ENCODE measurements at regions of chr2 and their contacts with region 1.

Region 1: DNA sequence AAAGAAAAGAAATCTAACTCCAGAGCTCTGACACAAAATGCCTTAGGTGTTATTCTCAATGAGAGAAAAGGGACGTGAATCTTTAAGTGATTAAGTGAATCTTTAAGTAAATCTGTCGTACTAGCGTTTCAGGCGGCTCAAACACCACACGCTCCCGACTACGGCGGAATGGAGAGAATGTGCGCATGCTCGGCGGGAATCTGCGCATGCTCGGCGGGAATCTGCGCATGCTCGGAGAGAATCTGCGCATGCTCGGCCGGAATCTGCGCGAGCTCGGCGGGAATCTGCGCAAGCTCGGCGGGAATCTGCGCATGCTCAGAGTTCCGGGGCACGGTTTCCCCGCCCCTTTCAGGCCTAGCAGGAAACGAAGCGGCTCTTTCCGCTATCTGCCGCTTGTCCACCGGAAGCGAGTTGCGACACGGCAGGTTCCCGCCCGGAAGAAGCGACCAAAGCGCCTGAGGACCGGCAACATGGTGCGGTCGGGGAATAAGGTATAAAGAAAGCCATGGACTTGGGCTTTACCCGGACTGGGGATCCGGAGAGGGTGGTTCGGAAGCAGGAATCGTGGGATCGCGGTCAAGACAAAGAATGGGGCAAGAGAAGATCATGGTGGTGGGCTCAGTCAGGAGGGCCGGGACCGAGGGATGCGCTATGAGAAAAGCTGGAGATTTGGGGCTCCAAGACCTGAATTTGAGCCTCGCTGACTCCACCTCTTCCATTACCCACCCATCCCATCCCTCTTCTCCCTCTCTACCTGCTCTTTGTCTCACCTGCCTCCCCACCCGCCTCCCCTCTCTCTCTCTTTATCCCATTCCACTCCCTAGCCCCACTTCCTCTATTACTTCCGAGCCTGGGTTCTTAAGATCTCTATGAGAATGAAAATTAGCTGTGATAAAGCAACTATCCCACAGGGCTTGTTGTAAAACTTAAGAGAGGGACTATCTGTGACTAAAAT is at the start of gene XRCC5:
- DNase-seq: peak; percentile 95 to 99 (median 96)
- H3K4me3 ChIP-seq: peak within 1 kb of the TSS; percentile 97
- H3K4me3 Mint-ChIP-seq: peak within 1 kb of the TSS; percentile 98 to 100 (median 100)
- H3K27ac ChIP-seq: peak within 1 kb of the TSS; percentile 93
- H3K27ac Mint-ChIP-seq: peak within 1 kb of the TSS; percentile 98 to 100 (median 100)
- H3K4me1 ChIP-seq: peaks cover 50% of the 10 kb centered on the region
- H3K4me1 Mint-ChIP-seq: peaks cover 50 to 62% (median 61%) of the 10 kb centered on the region in 3 donors
- H3K27me3 ChIP-seq: no peaks in the 10 kb centered on the region
- H3K27me3 Mint-ChIP-seq: peaks cover 0 to 6% of the 10 kb centered on the region in 2 donors
- total RNA-seq, gene XRCC5: 612 to 643 TPM

Region 2: GRCh38 chr2:216081487-216082116 is 27.6 kb before region 1 on chr2 and contains the starts of genes PECR and TMEM169:
- CTCF ChIA-PET with region 1: interaction called, 16 read pairs
- POLR2A ChIA-PET with region 1: interaction called, 21 read pairs
- DNase-seq: peak; percentile 69 to 82 (median 72)
- H3K4me3 ChIP-seq: peak within 1 kb of the TSS; percentile 90
- H3K4me3 Mint-ChIP-seq: peak within 1 kb of the TSS; percentile 86 to 98 (median 93)
- H3K27ac ChIP-seq: peak within 1 kb of the TSS; percentile 59
- H3K27ac Mint-ChIP-seq: peak within 1 kb of the TSS; percentile 69 to 97 (median 94)
- H3K4me1 ChIP-seq: peaks cover 59% of the 10 kb centered on the region
- H3K4me1 Mint-ChIP-seq: peaks cover 50 to 67% (median 64%) of the 10 kb centered on the region in 3 donors
- H3K27me3 ChIP-seq: no peaks in the 10 kb centered on the region
- H3K27me3 Mint-ChIP-seq: no peaks in the 10 kb centered on the region
- total RNA-seq, gene PECR: 10.5 to 12.6 TPM
- total RNA-seq, gene TMEM169: 0.63 to 0.73 TPM

Region 3: DNA sequence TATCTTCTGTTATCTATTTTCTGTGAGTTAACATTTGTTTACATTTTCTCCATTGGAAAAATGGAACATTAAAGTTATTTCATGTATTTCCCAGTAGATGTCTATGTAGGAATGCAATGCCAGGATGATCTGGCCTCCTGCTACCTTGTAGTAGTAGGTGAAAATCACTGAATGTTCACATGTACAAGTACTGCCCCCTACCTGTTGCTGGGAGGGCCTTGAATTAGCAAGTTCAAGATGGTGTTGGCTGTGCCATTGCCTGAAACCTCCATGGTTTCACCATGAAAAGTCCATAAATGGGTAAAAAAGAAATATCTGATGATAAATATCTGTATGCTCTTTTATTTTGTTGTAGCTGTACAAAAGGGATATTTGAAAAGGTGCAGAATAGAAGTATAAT is 30.6 kb after region 1 on chr2:
- CTCF ChIA-PET with region 1: interaction called, 10 read pairs
- POLR2A ChIA-PET with region 1: no interaction called
- DNase-seq: peak in 1 of 5 donors; percentile 42
- H3K4me3 ChIP-seq: no peak overlapping the region
- H3K4me3 Mint-ChIP-seq: no peak overlapping the region
- H3K27ac ChIP-seq: no peak overlapping the region
- H3K27ac Mint-ChIP-seq: peak overlapping the region in 4 of 8 donors; percentile 5 to 50 (median 24)
- H3K4me1 ChIP-seq: no peaks in the 10 kb centered on the region
- H3K4me1 Mint-ChIP-seq: peaks cover 14 to 35% (median 25%) of the 10 kb centered on the region in 3 donors
- H3K27me3 ChIP-seq: no peaks in the 10 kb centered on the region
- H3K27me3 Mint-ChIP-seq: no peaks in the 10 kb centered on the region

Region 4: GRCh38 chr2:216183462-216183861 is 74.2 kb after region 1 on chr2:
- CTCF ChIA-PET with region 1: no interaction called
- POLR2A ChIA-PET with region 1: no interaction called
- DNase-seq: no peak
- H3K4me3 ChIP-seq: no peak overlapping the region
- H3K4me3 Mint-ChIP-seq: no peak overlapping the region
- H3K27ac ChIP-seq: no peak overlapping the region
- H3K27ac Mint-ChIP-seq: peak overlapping the region in 5 of 8 donors; percentile 15 to 74 (median 58)
- H3K4me1 ChIP-seq: peaks cover 25% of the 10 kb centered on the region
- H3K4me1 Mint-ChIP-seq: peaks cover 67 to 87% (median 85%) of the 10 kb centered on the region in 3 donors
- H3K27me3 ChIP-seq: no peaks in the 10 kb centered on the region
- H3K27me3 Mint-ChIP-seq: peaks cover 0 to 1% of the 10 kb centered on the region in 2 donors